Transverse colon (tissue), 4 donors: ENCODE measurements at regions of chr9 and their contacts with region 1.

Region 1: GRCh38 chr9:74277532-74277931 is 219.6 kb upstream of the RORB start:
- DNase-seq: no peak
- H3K4me3 ChIP-seq: no peak overlapping the region
- H3K27ac ChIP-seq: no peak overlapping the region
- H3K4me1 ChIP-seq: no peaks in the 10 kb centered on the region
- H3K27me3 ChIP-seq: no peaks in the 10 kb centered on the region
- CTCF ChIP-seq: no peak
- EP300 ChIP-seq: no peak
- POLR2A ChIP-seq: no peak

Region 2: GRCh38 chr9:74245866-74246497 is 31.6 kb before region 1 on chr9:
- in situ Hi-C with region 1: no loop called
- intact Hi-C with region 1: loop called (anchors 2 kb)
- DNase-seq: no peak
- H3K4me3 ChIP-seq: no peak overlapping the region
- H3K27ac ChIP-seq: no peak overlapping the region
- H3K4me1 ChIP-seq: no peaks in the 10 kb centered on the region
- H3K27me3 ChIP-seq: no peaks in the 10 kb centered on the region
- CTCF ChIP-seq: no peak
- EP300 ChIP-seq: no peak
- POLR2A ChIP-seq: no peak